B cell (primary cell): ENCODE measurements at regions of chr2 and their contacts with region 1.

Region 1: GRCh38 chr2:218876562-218877219 is 4.0 kb upstream of the WNT10A start:
- DNase-seq: peak; percentile 87
- ATAC-seq: no peak
- H3K4me3 ChIP-seq: no peak overlapping the region
- H3K4me3 Mint-ChIP-seq: peak overlapping the region; percentile 2
- H3K27ac ChIP-seq: no peak overlapping the region
- H3K27ac Mint-ChIP-seq: peak overlapping the region; percentile 23
- H3K4me1 ChIP-seq: peaks cover 54 to 70% of the 10 kb centered on the region in 2 donors
- H3K4me1 Mint-ChIP-seq: peaks cover 59% of the 10 kb centered on the region
- H3K27me3 ChIP-seq: peaks cover 0 to 40% (median 17%) of the 10 kb centered on the region in 4 experiments
- H3K27me3 Mint-ChIP-seq: peaks cover 19% of the 10 kb centered on the region
- CTCF ChIP-seq: peak; percentile 94

Region 2: DNA sequence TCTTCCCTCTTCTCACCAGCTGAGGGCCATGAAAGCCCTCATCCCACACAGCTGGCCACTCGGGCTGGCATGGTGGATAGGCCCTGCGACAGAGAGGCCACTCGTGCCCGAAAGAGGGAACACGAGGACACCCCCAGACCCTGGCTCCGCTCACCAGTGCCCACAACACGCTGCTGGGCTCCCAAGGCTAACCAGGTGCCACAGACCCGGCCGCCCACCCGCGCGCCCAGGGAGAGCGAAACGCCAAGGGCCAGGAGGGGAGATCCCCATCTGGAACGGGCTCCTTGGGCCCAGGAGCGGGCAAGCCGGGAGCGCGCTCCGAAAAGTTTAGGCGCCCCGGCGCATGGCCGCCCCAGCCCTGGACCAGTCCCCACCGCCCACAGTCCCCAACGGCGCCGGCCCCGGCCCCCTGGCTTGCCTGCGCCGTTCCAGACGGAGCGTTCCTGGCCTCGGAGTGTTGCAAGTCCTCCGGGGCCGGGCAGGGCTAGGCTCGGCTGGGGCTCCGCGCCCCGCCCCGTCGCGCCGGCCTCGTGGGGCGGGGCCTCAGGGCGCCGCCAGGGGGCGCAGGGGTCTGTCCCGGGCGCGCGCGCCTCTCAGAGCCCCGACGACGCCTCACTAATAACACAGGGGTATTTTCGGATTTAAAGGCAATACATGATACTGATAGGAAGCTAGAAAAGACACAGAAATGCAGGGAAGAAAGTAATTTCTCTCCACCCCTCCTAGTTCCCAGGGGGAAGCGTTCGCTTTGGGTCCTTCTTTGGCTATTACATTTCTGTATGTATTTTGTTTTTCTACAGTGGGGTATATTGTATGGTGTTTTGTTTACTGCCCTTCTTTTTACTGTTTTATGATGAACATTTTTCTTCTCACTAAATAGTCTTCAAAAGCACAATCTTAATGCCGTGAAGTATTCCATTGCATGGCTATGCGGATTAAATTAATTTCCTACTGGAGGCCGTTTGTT is 584.4 kb before region 1 on chr2 and contains the start of gene TMBIM1:
- CTCF ChIA-PET with region 1: no interaction called
- POLR2A ChIA-PET with region 1: interaction called, 6 read pairs
- intact Hi-C with region 1: loop called (anchors 5 kb)
- DNase-seq: peak; percentile 90
- ATAC-seq: peak; percentile 72
- H3K4me3 ChIP-seq: peak within 1 kb of the TSS; percentile 50 to 95 (median 87)
- H3K4me3 Mint-ChIP-seq: peak within 1 kb of the TSS; percentile 89
- H3K27ac ChIP-seq: peak within 1 kb of the TSS; percentile 92 to 98
- H3K27ac Mint-ChIP-seq: peak within 1 kb of the TSS; percentile 93
- H3K4me1 ChIP-seq: peaks cover 57 to 71% of the 10 kb centered on the region in 2 donors
- H3K4me1 Mint-ChIP-seq: peaks cover 60% of the 10 kb centered on the region
- H3K27me3 ChIP-seq: no peaks in the 10 kb centered on the region
- H3K27me3 Mint-ChIP-seq: no peaks in the 10 kb centered on the region
- CTCF ChIP-seq: peak; percentile 90
- total RNA-seq, gene TMBIM1: 128 and 137 TPM in 2 replicates

Region 3: GRCh38 chr2:218892693-218893348 is 16.1 kb after region 1 on chr2:
- CTCF ChIA-PET with region 1: interaction called, 1,627 read pairs
- POLR2A ChIA-PET with region 1: interaction called, 490 read pairs
- intact Hi-C with region 1: loop called (anchors 1 kb)
- DNase-seq: peak; percentile 97
- ATAC-seq: peak; percentile 62
- H3K4me3 ChIP-seq: peak overlapping the region in 4 of 5 experiments; percentile 49 to 60 (median 52)
- H3K4me3 Mint-ChIP-seq: peak overlapping the region; percentile 88
- H3K27ac ChIP-seq: peak overlapping the region; percentile 96
- H3K27ac Mint-ChIP-seq: peak overlapping the region; percentile 97
- H3K4me1 ChIP-seq: peaks cover 54 to 63% of the 10 kb centered on the region in 2 donors
- H3K4me1 Mint-ChIP-seq: peaks cover 63% of the 10 kb centered on the region
- H3K27me3 ChIP-seq: no peaks in the 10 kb centered on the region
- H3K27me3 Mint-ChIP-seq: no peaks in the 10 kb centered on the region
- CTCF ChIP-seq: peak; percentile 66

Region 4: GRCh38 chr2:218908721-218909619 is 32.3 kb after region 1 on chr2:
- CTCF ChIA-PET with region 1: interaction called, 1,627 read pairs
- POLR2A ChIA-PET with region 1: interaction called, 3 read pairs
- intact Hi-C with region 1: no loop called
- DNase-seq: peak; percentile 91
- ATAC-seq: peak; percentile 97
- H3K4me3 ChIP-seq: peak overlapping the region in 4 of 5 experiments; percentile 49 to 83 (median 60)
- H3K4me3 Mint-ChIP-seq: peak overlapping the region; percentile 91
- H3K27ac ChIP-seq: peak overlapping the region; percentile 7 to 18
- H3K27ac Mint-ChIP-seq: peak overlapping the region; percentile 82
- H3K4me1 ChIP-seq: peaks cover 11 to 15% of the 10 kb centered on the region in 2 donors
- H3K4me1 Mint-ChIP-seq: peaks cover 10% of the 10 kb centered on the region
- H3K27me3 ChIP-seq: peaks cover 0 to 10% (median 1%) of the 10 kb centered on the region in 4 experiments
- H3K27me3 Mint-ChIP-seq: peaks cover 24% of the 10 kb centered on the region
- CTCF ChIP-seq: no peak

Region 5: GRCh38 chr2:218962859-218963492 is 86.3 kb after region 1 on chr2:
- CTCF ChIA-PET with region 1: interaction called, 12 read pairs
- POLR2A ChIA-PET with region 1: no interaction called
- intact Hi-C with region 1: no loop called
- DNase-seq: peak; percentile 62
- ATAC-seq: no peak
- H3K4me3 ChIP-seq: no peak overlapping the region
- H3K4me3 Mint-ChIP-seq: no peak overlapping the region
- H3K27ac ChIP-seq: no peak overlapping the region
- H3K27ac Mint-ChIP-seq: no peak overlapping the region
- H3K4me1 ChIP-seq: peaks cover 24 to 39% of the 10 kb centered on the region in 2 donors
- H3K4me1 Mint-ChIP-seq: peaks cover 21% of the 10 kb centered on the region
- H3K27me3 ChIP-seq: peaks cover 0 to 66% (median 46%) of the 10 kb centered on the region in 4 experiments
- H3K27me3 Mint-ChIP-seq: peaks cover 59% of the 10 kb centered on the region
- CTCF ChIP-seq: no peak

Region 6: DNA sequence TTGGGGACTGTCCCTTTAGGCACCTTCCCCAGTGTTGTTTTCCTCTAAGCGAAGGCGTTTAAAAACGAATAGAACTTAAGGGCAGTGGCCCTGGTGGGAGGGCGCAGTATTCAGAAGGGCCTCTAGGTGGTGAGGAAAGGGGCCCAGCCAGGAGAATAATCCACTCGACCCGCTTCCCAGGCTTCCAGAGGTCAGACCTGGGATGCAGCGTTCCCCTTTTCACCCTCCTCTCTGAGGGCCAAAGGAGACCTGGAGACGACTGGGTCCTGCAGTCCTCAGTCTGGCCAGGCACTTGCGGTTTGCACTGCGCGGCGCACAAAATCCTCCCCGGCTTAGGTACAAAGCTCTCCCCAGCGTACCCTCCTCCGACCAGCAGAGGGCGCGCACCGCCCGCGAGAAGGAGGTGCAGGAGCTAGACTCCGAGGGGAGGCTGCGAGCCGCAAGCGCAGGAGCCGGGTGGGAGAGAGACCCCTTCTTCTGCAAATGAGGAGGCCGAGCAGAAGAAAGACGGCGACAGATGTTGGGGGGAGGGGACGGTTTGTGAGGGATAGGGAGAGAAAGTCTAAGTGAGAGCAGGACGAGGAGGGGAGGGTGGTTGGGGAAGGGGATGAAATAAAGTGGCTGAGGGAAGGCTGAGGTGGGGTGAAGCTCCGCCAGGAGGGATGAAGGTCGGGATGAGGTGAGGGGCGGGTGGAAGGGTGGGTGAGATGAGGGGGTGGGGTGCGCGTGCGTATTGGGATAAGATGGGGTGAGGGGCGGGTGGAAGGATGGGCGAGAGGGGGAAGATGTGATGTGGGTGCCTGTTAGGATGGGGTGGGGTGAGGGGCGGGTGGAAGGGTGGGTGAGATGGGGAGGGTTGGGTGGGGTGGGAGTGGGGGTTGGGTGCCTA is 103.4 kb after region 1 on chr2:
- CTCF ChIA-PET with region 1: interaction called, 55 read pairs
- POLR2A ChIA-PET with region 1: interaction called, 3 read pairs
- intact Hi-C with region 1: loop called (anchors 5 kb)
- DNase-seq: peak; percentile 91
- ATAC-seq: peak; percentile 85
- H3K4me3 ChIP-seq: peak overlapping the region in 4 of 5 experiments; percentile 3 to 45 (median 26)
- H3K4me3 Mint-ChIP-seq: peak overlapping the region; percentile 85
- H3K27ac ChIP-seq: no peak overlapping the region
- H3K27ac Mint-ChIP-seq: peak overlapping the region; percentile 63
- H3K4me1 ChIP-seq: peaks cover 37 to 51% of the 10 kb centered on the region in 2 donors
- H3K4me1 Mint-ChIP-seq: peaks cover 28% of the 10 kb centered on the region
- H3K27me3 ChIP-seq: peaks cover 0 to 79% (median 55%) of the 10 kb centered on the region in 4 experiments
- H3K27me3 Mint-ChIP-seq: peaks cover 65% of the 10 kb centered on the region
- CTCF ChIP-seq: peak; percentile 87

Region 7: DNA sequence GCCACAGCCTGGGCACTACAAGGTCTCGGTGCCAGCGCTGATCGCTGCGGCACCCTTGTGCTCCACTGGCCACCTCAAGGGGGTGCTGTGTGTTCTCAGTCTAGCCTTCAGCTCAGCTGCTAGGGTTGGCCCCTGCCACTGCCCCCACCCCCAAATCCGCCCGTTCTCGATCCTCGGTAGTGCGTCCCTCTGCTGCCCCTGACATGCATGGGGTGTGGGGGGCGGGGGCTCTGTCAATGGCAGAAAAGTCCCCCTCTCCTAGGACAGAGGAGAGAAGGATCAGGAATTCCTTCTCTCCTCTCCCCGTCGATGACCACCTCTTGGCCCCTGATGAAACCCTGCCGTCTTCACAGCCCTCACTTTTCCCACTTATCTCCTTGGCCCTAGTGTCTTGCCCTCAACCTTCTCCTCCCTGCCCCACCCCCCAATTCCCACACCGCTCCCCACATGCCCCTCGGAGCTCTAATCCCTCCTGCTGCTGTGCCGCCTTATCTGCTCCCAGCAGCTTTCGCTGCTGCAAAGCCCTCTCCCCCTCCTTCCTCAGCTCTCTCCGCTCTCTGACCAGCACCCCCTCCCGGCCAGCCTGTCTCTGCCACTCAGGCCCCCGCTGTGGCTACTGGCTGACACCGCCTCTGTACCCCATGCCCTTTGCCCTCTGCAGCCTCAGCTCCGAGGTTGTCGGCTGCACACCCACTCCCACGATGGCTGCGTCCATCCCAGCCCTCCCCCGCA is 633.3 kb after region 1 on chr2:
- CTCF ChIA-PET with region 1: no interaction called
- POLR2A ChIA-PET with region 1: no interaction called
- intact Hi-C with region 1: no loop called
- DNase-seq: peak; percentile 57
- ATAC-seq: peak; percentile 72
- H3K4me3 ChIP-seq: peak overlapping the region in 1 of 5 experiments; percentile 8
- H3K4me3 Mint-ChIP-seq: peak overlapping the region; percentile 69
- H3K27ac ChIP-seq: no peak overlapping the region
- H3K27ac Mint-ChIP-seq: no peak overlapping the region
- H3K4me1 ChIP-seq: peaks cover 15 to 30% of the 10 kb centered on the region in 2 donors
- H3K4me1 Mint-ChIP-seq: peaks cover 26% of the 10 kb centered on the region
- H3K27me3 ChIP-seq: peaks cover 0 to 68% (median 19%) of the 10 kb centered on the region in 4 experiments
- H3K27me3 Mint-ChIP-seq: peaks cover 48% of the 10 kb centered on the region
- CTCF ChIP-seq: peak; percentile 59